Psoas muscle (tissue), 8 donors: ENCODE measurements at regions of chr2 and their contacts with region 1.

Region 1: DNA sequence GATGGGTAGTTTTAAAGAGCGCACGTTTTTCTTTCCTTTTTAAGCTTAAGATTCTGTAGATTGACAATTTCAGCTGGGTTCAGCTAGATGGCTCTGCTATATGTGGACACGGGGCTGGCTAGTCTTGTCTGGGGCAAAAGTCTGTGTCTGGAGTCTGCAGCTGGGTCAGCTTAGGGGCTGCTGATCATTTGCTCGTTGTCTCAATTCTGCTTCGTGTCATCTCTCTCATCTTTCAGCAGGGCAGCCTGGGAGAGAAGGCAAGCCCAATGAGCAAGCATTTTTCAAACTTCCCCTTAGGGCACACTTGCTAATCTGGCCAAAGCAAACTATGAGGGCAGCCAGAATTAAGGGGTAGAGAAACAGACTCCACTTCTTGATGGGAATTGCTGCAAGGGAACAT is 462.6 kb downstream of the SLC4A3 start:
- DNase-seq: no peak
- ATAC-seq: no peak
- H3K4me3 ChIP-seq: no peak overlapping the region
- H3K27ac ChIP-seq: no peak overlapping the region
- H3K4me1 ChIP-seq: no peaks in the 10 kb centered on the region
- H3K27me3 ChIP-seq: no peaks in the 10 kb centered on the region
- CTCF ChIP-seq: no peak

Region 2: DNA sequence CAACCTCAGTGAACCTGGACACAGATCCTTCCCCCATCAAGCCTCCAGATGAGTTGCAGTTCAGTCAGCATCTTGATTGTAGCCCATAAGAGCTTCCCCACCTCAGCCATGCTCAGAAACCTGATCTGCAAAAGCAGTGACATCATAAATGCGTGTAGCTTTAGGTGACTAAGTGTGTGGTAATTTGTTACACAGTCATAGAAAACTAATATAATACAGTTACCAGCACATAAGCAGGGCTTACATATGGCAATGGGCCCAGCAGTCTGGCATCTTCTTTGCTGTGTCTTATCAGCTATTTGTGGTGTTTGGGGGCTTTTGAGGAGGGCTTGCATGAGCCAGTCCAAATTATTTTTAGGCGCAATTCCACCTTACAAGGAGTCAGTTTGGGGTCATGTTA is 344.4 kb after region 1 on chr2:
- intact Hi-C with region 1: loop called in 1 of 2 experiments (anchors 5 kb)
- DNase-seq: no peak
- ATAC-seq: no peak
- H3K4me3 ChIP-seq: no peak overlapping the region
- H3K27ac ChIP-seq: no peak overlapping the region
- H3K4me1 ChIP-seq: no peaks in the 10 kb centered on the region
- H3K27me3 ChIP-seq: no peaks in the 10 kb centered on the region
- CTCF ChIP-seq: no peak